ENCODE measurements at regions of chr17 and their contacts with region 1.

Region 1: GRCh38 chr17:77088455-77089123 is 52.2 kb upstream of the SEC14L1 start:
- DNase-seq: peak; percentile 93 to 94
- H3K4me3 ChIP-seq: peak overlapping the region; percentile 64 to 95 (median 72)
- H3K27ac ChIP-seq: peak overlapping the region; percentile 79
- H3K4me1 ChIP-seq: peaks cover 0 to 4% (median under 1%) of the 10 kb centered on the region in 4 experiments; a peak in 2 of 7 replicates
- H3K27me3 ChIP-seq: no peaks in the 10 kb centered on the region
- CTCF ChIP-seq: peak; percentile 82 to 94 (median 93)
- EP300 ChIP-seq: peak in 1 of 2 experiments; percentile 62; a peak in 1 of 3 replicates
- POLR2A ChIP-seq: peak; percentile 88 to 92
- RAD21 ChIP-seq: peak; percentile 50 to 59; a peak in 3 of 4 replicates

Region 2: GRCh38 chr17:77068915-77069314 is 19.7 kb before region 1 on chr17:
- CTCF ChIA-PET with region 1: interaction called, 44 read pairs
- POLR2A ChIA-PET with region 1: interaction called, 5 read pairs
- DNase-seq: no peak
- H3K4me3 ChIP-seq: no peak overlapping the region
- H3K27ac ChIP-seq: no peak overlapping the region
- H3K4me1 ChIP-seq: peaks cover 0 to 3% (median 0%) of the 10 kb centered on the region in 4 experiments; a peak in 3 of 7 replicates
- H3K27me3 ChIP-seq: no peaks in the 10 kb centered on the region
- CTCF ChIP-seq: no peak
- EP300 ChIP-seq: no peak
- POLR2A ChIP-seq: no peak
- RAD21 ChIP-seq: no peak

Region 3: GRCh38 chr17:77101521-77102410 is 13.2 kb after region 1 on chr17:
- CTCF ChIA-PET with region 1: interaction called, 5 read pairs
- POLR2A ChIA-PET with region 1: interaction called, 18 read pairs
- DNase-seq: no peak
- H3K4me3 ChIP-seq: no peak overlapping the region
- H3K27ac ChIP-seq: no peak overlapping the region
- H3K4me1 ChIP-seq: peaks cover 0 to 5% (median 4%) of the 10 kb centered on the region in 4 experiments; a peak in 5 of 7 replicates
- H3K27me3 ChIP-seq: no peaks in the 10 kb centered on the region
- CTCF ChIP-seq: no peak
- EP300 ChIP-seq: no peak
- POLR2A ChIP-seq: no peak
- RAD21 ChIP-seq: no peak

Region 4: GRCh38 chr17:77153472-77153871 is 64.9 kb after region 1 on chr17:
- CTCF ChIA-PET with region 1: no interaction called
- POLR2A ChIA-PET with region 1: no interaction called
- DNase-seq: no peak
- H3K4me3 ChIP-seq: no peak overlapping the region
- H3K27ac ChIP-seq: no peak overlapping the region
- H3K4me1 ChIP-seq: peaks cover 0 to 1% (median 0%) of the 10 kb centered on the region in 4 experiments; a peak in 2 of 7 replicates
- H3K27me3 ChIP-seq: no peaks in the 10 kb centered on the region
- CTCF ChIP-seq: no peak
- EP300 ChIP-seq: no peak
- POLR2A ChIP-seq: no peak
- RAD21 ChIP-seq: no peak

Region 5: DNA sequence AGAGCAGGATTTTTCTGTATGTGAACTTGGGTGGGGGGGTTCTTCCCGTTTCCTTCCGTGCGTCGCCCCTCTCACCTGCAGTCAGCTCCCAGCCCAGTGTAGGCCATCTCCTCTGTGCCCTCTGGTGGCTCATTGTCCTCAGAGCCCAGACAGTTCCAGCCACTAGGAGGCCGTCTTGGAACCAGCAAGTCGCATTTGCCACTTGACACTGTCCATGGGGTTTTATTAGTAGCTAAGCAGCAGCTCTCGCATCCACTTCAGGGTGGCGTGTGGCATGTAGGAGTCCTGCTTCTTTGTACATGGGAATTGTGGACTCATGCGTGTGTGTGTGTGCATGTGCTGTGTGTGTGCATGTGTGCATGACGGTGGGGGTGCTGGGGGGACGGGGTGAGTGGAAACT is 126.2 kb after region 1 on chr17:
- CTCF ChIA-PET with region 1: interaction called, 31 read pairs
- POLR2A ChIA-PET with region 1: interaction called, 3 read pairs
- DNase-seq: peak; percentile 27 to 63
- H3K4me3 ChIP-seq: no peak overlapping the region
- H3K27ac ChIP-seq: no peak overlapping the region
- H3K4me1 ChIP-seq: no peaks in the 10 kb centered on the region; a peak in 1 of 7 replicates
- H3K27me3 ChIP-seq: no peaks in the 10 kb centered on the region
- CTCF ChIP-seq: peak; percentile 87 to 99 (median 95)
- EP300 ChIP-seq: no peak
- POLR2A ChIP-seq: no peak
- RAD21 ChIP-seq: peak; percentile 67 to 77

Measured in H1 (cell line).